ENCODE measurements at regions of chr3 and their contacts with region 1.

Region 1: GRCh38 chr3:62622553-62623193 is 249.3 kb upstream of the FEZF2 start:
- DNase-seq: peak; percentile 32
- H3K4me3 ChIP-seq: no peak overlapping the region
- H3K27ac ChIP-seq: no peak overlapping the region
- H3K27me3 ChIP-seq: peaks cover 7% of the 10 kb centered on the region
- CTCF ChIP-seq: peak; percentile 77

Region 2: DNA sequence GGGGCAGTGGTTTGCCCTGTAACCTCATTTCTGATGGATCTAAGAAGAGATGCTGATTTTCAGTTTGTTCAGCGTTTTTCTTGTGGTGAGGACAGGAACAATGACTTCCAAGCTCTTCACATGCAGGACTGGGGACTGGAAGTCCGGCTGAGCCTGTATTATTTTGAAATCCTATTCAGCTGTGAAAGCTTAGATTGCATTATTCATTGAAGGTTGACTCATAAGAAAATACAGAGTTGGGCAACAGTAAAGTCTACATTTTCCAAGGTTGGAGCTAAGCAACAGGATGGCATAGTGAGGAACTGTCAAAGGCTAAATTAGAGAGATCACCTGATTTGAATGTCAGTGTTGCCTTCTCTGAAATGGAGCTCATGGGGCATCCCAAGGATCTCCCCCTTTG is 18.4 kb before region 1 on chr3:
- CTCF ChIA-PET with region 1: interaction called, 21 read pairs
- POLR2A ChIA-PET with region 1: no interaction called
- DNase-seq: no peak
- H3K4me3 ChIP-seq: peak overlapping the region; percentile 35
- H3K27ac ChIP-seq: peak overlapping the region; percentile 97
- H3K27me3 ChIP-seq: no peaks in the 10 kb centered on the region
- CTCF ChIP-seq: no peak

Region 3: GRCh38 chr3:62611562-62612240 is 11.0 kb before region 1 on chr3:
- CTCF ChIA-PET with region 1: interaction called, 19 read pairs
- POLR2A ChIA-PET with region 1: no interaction called
- DNase-seq: no peak
- H3K4me3 ChIP-seq: no peak overlapping the region
- H3K27ac ChIP-seq: no peak overlapping the region
- H3K27me3 ChIP-seq: no peaks in the 10 kb centered on the region
- CTCF ChIP-seq: no peak

Region 4: GRCh38 chr3:62636235-62636826 is 13.7 kb after region 1 on chr3:
- CTCF ChIA-PET with region 1: interaction called, 10 read pairs
- POLR2A ChIA-PET with region 1: no interaction called
- DNase-seq: no peak
- H3K4me3 ChIP-seq: no peak overlapping the region
- H3K27ac ChIP-seq: no peak overlapping the region
- H3K27me3 ChIP-seq: no peaks in the 10 kb centered on the region
- CTCF ChIP-seq: no peak

Region 5: DNA sequence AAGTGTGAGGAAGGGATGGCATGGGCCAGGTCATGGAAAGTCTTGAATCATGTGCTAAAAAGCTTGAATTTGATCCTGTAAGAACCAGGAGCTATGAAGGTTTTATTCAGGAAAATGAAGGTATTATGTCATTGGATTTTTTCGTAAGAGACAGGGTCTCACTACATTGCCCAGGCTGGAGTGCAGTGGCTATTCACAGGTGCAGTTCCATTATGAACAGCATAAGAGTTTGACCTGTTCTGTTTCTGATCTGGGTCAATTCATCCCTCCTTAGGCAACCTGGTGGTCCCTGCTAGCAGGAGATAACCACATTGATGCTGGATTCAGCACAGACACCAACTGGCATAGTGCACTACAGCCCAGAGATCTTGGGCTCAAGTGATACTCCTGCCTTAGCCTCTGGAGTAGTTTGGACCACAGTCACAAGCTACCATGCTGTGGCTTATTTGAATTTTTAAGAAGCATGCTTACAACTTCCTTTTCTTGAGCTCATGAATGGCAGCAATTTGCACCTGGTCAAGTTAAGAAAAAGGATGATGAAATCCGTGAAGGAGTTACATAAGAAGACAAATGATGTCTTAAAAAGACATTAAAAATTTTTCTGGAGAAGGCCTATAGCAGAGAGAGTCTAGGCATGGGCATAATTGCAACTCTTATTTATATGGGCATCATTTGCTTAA is 173.4 kb after region 1 on chr3:
- CTCF ChIA-PET with region 1: no interaction called
- POLR2A ChIA-PET with region 1: no interaction called
- DNase-seq: no peak
- H3K4me3 ChIP-seq: no peak overlapping the region
- H3K27ac ChIP-seq: no peak overlapping the region
- H3K27me3 ChIP-seq: no peaks in the 10 kb centered on the region
- CTCF ChIP-seq: no peak

Region 6: GRCh38 chr3:63193629-63194028 is 571.0 kb after region 1 on chr3:
- CTCF ChIA-PET with region 1: interaction called, 34 read pairs
- POLR2A ChIA-PET with region 1: no interaction called
- DNase-seq: no peak
- H3K4me3 ChIP-seq: no peak overlapping the region
- H3K27ac ChIP-seq: no peak overlapping the region
- H3K27me3 ChIP-seq: no peaks in the 10 kb centered on the region
- CTCF ChIP-seq: peak; percentile 49

Region 7: GRCh38 chr3:63228087-63229023 is 605.7 kb after region 1 on chr3:
- CTCF ChIA-PET with region 1: interaction called, 18 read pairs
- POLR2A ChIA-PET with region 1: no interaction called
- DNase-seq: no peak
- H3K4me3 ChIP-seq: no peak overlapping the region
- H3K27ac ChIP-seq: no peak overlapping the region
- H3K27me3 ChIP-seq: no peaks in the 10 kb centered on the region
- CTCF ChIP-seq: peak; percentile 46

Region 8: GRCh38 chr3:63333842-63334241 is 711.2 kb after region 1 on chr3:
- CTCF ChIA-PET with region 1: interaction called, 17 read pairs
- POLR2A ChIA-PET with region 1: no interaction called
- DNase-seq: no peak
- H3K4me3 ChIP-seq: no peak overlapping the region
- H3K27ac ChIP-seq: no peak overlapping the region
- H3K27me3 ChIP-seq: no peaks in the 10 kb centered on the region
- CTCF ChIP-seq: no peak